B cell (primary cell): ENCODE measurements at regions of chr1 and their contacts with region 1.

Region 1: DNA sequence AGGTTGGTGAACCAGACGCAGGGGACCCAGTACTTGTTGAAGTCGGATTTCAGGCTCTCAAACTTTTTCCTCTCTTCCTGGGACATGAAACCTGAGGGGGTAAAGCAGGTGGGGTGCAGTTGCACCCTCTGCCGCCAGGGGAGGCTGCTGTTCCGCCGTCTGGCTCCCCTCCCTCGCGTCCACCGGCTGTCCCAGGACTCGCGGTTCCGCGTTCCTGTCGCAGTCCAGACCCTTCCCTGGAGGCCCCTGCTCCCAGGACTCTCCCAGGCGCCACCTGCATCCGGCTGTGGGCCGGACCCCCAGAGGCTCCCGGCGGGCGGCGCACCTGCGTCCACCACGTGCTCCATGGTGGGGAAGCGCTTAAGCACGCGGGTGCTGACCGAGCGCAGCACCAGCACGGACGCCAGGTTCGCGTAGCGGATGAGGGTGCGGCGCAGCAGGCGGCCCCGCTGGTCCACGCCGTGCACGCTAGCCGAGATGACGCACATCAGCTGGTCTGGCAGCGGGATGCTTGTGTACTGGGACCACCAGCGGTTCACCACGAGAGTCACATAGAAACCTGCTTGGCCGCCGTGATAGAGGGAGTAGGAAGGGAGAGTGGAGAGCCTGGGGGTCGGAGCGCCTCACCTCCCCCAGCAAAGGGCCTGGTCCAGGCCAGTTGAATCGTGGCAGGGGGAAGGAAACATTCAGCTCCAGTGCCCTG is 1.7 kb downstream of the BEST4 start:
- DNase-seq: peak; percentile 88
- ATAC-seq: peak; percentile 72
- H3K4me3 ChIP-seq: peak overlapping the region in 4 of 5 experiments; percentile 53 to 68 (median 60)
- H3K4me3 Mint-ChIP-seq: peak overlapping the region; percentile 82
- H3K27ac ChIP-seq: peak overlapping the region; percentile 47 to 50
- H3K27ac Mint-ChIP-seq: peak overlapping the region; percentile 92
- H3K4me1 ChIP-seq: peaks cover 25 to 34% of the 10 kb centered on the region in 2 donors
- H3K4me1 Mint-ChIP-seq: peaks cover 31% of the 10 kb centered on the region
- H3K27me3 ChIP-seq: no peaks in the 10 kb centered on the region
- H3K27me3 Mint-ChIP-seq: no peaks in the 10 kb centered on the region
- CTCF ChIP-seq: peak; percentile 100

Region 2: GRCh38 chr1:44714944-44715571 is 71.2 kb before region 1 on chr1:
- CTCF ChIA-PET with region 1: interaction called, 4 read pairs
- POLR2A ChIA-PET with region 1: interaction called, 6 read pairs
- intact Hi-C with region 1: loop called (anchors 2 kb)
- DNase-seq: peak; percentile 87
- ATAC-seq: peak; percentile 82
- H3K4me3 ChIP-seq: no peak overlapping the region
- H3K4me3 Mint-ChIP-seq: peak overlapping the region; percentile 64
- H3K27ac ChIP-seq: peak overlapping the region in 1 of 2 donors; percentile 56
- H3K27ac Mint-ChIP-seq: peak overlapping the region; percentile 86
- H3K4me1 ChIP-seq: peaks cover 50 to 53% of the 10 kb centered on the region in 2 donors
- H3K4me1 Mint-ChIP-seq: peaks cover 63% of the 10 kb centered on the region
- H3K27me3 ChIP-seq: no peaks in the 10 kb centered on the region
- H3K27me3 Mint-ChIP-seq: no peaks in the 10 kb centered on the region
- CTCF ChIP-seq: peak; percentile 92

Region 3: DNA sequence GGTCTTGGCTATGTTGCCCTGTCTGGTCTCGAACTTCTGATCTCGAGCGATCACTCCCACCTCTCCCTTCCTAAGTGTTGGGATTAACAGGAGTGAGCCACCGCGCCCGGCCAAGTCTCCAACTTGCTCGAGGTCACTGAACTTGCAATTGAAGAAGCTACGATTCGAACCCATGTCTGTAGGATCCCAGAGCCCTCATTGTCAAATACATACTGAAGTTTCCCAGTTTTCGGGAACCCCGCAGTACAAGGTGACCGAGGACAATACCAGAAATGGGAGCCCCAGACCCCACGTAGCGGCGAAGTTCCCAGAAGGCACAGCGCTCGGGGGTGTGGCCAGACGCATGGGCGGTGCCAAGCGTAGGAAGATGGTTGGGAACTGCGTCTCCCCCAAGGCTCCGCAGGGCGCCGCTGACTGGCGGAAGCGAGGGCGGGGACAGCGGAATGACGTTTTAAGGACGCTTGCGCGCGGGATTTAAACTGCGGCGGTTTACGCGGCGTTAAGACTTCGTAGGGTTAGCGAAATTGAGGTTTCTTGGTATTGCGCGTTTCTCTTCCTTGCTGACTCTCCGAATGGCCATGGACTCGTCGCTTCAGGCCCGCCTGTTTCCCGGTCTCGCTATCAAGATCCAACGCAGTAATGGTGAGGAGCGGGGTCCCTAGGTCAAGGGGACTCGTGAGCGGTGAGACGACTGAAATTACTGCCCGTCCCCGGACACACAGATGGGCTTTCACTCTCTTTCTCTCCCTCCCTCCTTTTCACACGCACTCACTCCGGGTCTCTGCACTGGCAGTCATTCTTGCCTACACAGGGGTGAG is 46.7 kb before region 1 on chr1 and contains the start of gene KIF2C:
- CTCF ChIA-PET with region 1: interaction called, 4 read pairs
- POLR2A ChIA-PET with region 1: interaction called, 15 read pairs
- intact Hi-C with region 1: no loop called
- DNase-seq: peak; percentile 97
- ATAC-seq: peak; percentile 100
- H3K4me3 ChIP-seq: peak within 1 kb of the TSS; percentile 54 to 90 (median 87)
- H3K4me3 Mint-ChIP-seq: peak within 1 kb of the TSS; percentile 95
- H3K27ac ChIP-seq: peak within 1 kb of the TSS; percentile 60 to 85
- H3K27ac Mint-ChIP-seq: peak within 1 kb of the TSS; percentile 93
- H3K4me1 ChIP-seq: peaks cover 7 to 12% of the 10 kb centered on the region in 2 donors
- H3K4me1 Mint-ChIP-seq: peaks cover 17% of the 10 kb centered on the region
- H3K27me3 ChIP-seq: no peaks in the 10 kb centered on the region
- H3K27me3 Mint-ChIP-seq: no peaks in the 10 kb centered on the region
- CTCF ChIP-seq: no peak
- total RNA-seq, gene KIF2C: 0.25 and 0.51 TPM in 2 replicates

Region 4: GRCh38 chr1:44799770-44800584 is 13.7 kb after region 1 on chr1 and contains the start of gene PLK3:
- CTCF ChIA-PET with region 1: interaction called, 44 read pairs
- POLR2A ChIA-PET with region 1: interaction called, 7 read pairs
- intact Hi-C with region 1: loop called (anchors 2 kb)
- DNase-seq: peak; percentile 99
- ATAC-seq: peak; percentile 89
- H3K4me3 ChIP-seq: peak within 1 kb of the TSS; percentile 61 to 88 (median 85)
- H3K4me3 Mint-ChIP-seq: peak within 1 kb of the TSS; percentile 99
- H3K27ac ChIP-seq: peak within 1 kb of the TSS; percentile 84 to 93
- H3K27ac Mint-ChIP-seq: peak within 1 kb of the TSS; percentile 100
- H3K4me1 ChIP-seq: peaks cover 16 to 38% of the 10 kb centered on the region in 2 donors
- H3K4me1 Mint-ChIP-seq: peaks cover 33% of the 10 kb centered on the region
- H3K27me3 ChIP-seq: no peaks in the 10 kb centered on the region
- H3K27me3 Mint-ChIP-seq: no peaks in the 10 kb centered on the region
- CTCF ChIP-seq: peak; percentile 85
- total RNA-seq, gene PLK3: 30.1 and 35.9 TPM in 2 replicates

Region 5: DNA sequence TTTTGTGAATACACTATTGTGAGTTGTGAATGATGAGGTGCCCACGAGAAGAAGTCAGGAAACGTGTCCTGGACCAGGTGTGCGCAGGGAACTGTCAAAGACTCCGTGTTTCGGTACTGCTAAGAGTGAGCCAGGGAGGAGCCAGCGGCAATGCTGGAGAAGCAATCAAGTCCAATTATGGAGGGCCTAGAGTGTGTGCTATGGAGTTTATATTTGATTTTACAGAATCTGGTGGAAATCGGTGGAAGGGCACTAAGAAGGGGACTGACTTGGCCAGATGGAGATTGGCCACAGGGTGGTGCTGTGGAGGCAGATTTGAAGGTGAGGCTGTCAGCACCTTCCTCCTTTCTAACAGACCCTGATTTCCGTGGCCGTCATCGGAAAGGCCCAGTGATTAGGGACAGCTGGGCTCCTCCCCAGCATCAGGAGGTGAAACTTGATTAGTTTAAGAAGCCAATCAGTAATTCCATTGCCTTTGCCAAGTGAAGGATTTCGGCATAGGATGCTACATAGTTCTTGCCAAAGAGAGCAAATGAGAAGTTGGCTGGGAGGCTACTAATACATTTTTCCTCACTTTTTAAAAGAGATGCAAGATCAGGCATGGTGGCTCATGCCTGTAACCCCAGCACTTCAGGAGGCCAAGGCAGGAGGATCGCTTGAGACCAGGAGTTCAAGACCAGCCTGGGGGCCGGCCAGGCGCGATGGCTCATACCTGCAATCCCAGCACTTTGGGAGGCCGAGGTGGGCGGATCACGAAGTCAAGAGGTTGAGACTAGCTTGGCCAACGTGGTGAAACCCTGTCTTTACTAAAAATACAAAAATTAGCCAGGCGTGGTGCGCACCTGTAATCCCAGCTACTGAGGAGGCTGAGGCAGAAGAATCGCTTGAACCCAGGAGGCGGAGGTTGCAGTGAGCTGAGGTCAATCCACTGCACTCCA is 49.7 kb after region 1 on chr1:
- CTCF ChIA-PET with region 1: interaction called, 3 read pairs
- POLR2A ChIA-PET with region 1: no interaction called
- intact Hi-C with region 1: loop called (anchors 1 kb)
- DNase-seq: peak; percentile 89
- ATAC-seq: peak; percentile 98
- H3K4me3 ChIP-seq: no peak overlapping the region
- H3K4me3 Mint-ChIP-seq: peak overlapping the region; percentile 62
- H3K27ac ChIP-seq: no peak overlapping the region
- H3K27ac Mint-ChIP-seq: peak overlapping the region; percentile 55
- H3K4me1 ChIP-seq: peaks cover 0 to 7% of the 10 kb centered on the region in 2 donors
- H3K4me1 Mint-ChIP-seq: peaks cover 11% of the 10 kb centered on the region
- H3K27me3 ChIP-seq: no peaks in the 10 kb centered on the region
- H3K27me3 Mint-ChIP-seq: peaks cover 6% of the 10 kb centered on the region
- CTCF ChIP-seq: peak; percentile 85

Region 6: GRCh38 chr1:44862829-44863401 is 76.6 kb after region 1 on chr1:
- CTCF ChIA-PET with region 1: no interaction called
- POLR2A ChIA-PET with region 1: no interaction called
- intact Hi-C with region 1: no loop called
- DNase-seq: no peak
- ATAC-seq: no peak
- H3K4me3 ChIP-seq: no peak overlapping the region
- H3K4me3 Mint-ChIP-seq: no peak overlapping the region
- H3K27ac ChIP-seq: no peak overlapping the region
- H3K27ac Mint-ChIP-seq: no peak overlapping the region
- H3K4me1 ChIP-seq: peaks cover 16% of the 10 kb centered on the region in 2 donors
- H3K4me1 Mint-ChIP-seq: peaks cover 18% of the 10 kb centered on the region
- H3K27me3 ChIP-seq: no peaks in the 10 kb centered on the region
- H3K27me3 Mint-ChIP-seq: no peaks in the 10 kb centered on the region
- CTCF ChIP-seq: no peak

Region 7: GRCh38 chr1:44903011-44903680 is 116.9 kb after region 1 on chr1:
- CTCF ChIA-PET with region 1: no interaction called
- POLR2A ChIA-PET with region 1: no interaction called
- intact Hi-C with region 1: no loop called
- DNase-seq: no peak
- ATAC-seq: no peak
- H3K4me3 ChIP-seq: no peak overlapping the region
- H3K4me3 Mint-ChIP-seq: no peak overlapping the region
- H3K27ac ChIP-seq: no peak overlapping the region
- H3K27ac Mint-ChIP-seq: no peak overlapping the region
- H3K4me1 ChIP-seq: no peaks in the 10 kb centered on the region
- H3K4me1 Mint-ChIP-seq: peaks cover 2% of the 10 kb centered on the region
- H3K27me3 ChIP-seq: no peaks in the 10 kb centered on the region
- H3K27me3 Mint-ChIP-seq: no peaks in the 10 kb centered on the region
- CTCF ChIP-seq: no peak